Right ventricle myocardium inferior (tissue), 1 donor: ENCODE measurements at regions of chr6 and their contacts with region 1.

Region 1: DNA sequence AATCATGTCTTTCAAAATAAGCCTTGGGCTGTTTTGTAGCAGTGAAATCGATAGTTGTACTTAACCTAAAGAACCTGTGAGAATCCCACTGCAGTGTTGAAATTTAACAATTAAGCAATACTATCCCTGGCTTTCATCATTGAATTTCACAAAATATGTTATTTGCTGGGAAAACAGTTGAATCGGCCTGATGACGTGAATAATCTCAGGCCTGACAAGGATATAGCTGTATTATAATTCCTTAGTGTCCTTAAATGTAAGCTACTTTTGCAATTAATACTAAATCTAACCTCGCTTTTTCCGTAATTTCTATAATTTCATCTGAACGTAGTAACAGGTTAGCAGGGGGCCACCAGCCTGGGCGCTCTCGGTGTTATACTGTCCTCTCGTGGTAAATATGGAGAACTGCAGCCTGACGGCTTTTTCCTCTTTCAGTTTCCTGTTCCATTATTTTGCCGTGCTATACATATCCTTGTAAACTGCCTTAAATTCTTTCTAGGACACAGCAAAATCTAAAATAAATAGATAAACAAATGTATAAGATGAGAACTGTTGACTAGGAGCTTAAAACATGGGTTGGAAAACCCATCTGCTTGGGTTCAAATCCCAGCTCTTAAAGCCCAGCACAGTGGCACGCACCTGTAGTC is 24.0 kb downstream of the MTFR2 start:
- DNase-seq: peak; percentile 78
- ATAC-seq: peak; percentile 74

Region 2: DNA sequence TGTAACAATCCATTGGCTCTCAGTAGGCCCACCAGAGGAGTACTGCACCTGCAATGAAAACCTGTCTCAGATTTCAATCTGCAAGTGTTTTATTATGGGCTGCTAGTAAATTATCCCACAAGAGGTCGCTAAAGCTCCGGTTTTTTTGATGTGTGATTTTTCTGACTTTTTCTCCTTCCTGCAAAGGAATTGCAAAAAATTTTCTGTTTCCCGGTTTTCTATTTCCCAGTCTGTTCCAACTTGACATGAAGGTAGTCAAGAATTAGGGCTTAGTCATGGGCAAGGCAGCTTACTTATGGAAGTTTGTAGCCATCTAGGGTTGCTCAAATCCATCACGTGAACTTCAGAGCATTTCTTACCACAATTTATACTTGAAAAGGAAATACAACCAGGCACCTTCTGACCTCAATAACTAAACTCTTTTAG is 690.1 kb before region 1 on chr6:
- intact Hi-C with region 1: loop called (anchors 1 kb)
- DNase-seq: no peak
- ATAC-seq: no peak

Region 3: GRCh38 chr6:135944612-135945011 is 281.5 kb before region 1 on chr6:
- intact Hi-C with region 1: loop called (anchors 5 kb)
- DNase-seq: no peak
- ATAC-seq: no peak

Region 4: DNA sequence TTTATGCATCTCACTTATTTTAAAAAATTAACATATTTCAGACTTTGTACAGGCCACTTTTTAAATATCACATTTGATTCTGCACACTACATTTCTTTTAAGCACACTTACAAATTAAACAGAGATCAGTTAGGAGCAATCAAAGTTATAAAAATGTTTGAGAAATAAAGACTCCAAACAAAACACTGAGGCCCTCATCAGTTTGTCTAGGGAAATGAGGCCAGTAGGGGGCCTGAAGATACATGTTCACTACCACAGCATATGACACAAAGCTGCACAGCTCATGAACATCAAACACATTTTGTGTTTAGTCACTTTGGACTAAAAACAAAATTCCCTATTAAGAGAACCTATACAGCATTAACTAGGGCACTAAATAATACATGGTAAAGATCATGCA is 194.2 kb before region 1 on chr6:
- intact Hi-C with region 1: loop called (anchors 5 kb)
- DNase-seq: no peak
- ATAC-seq: no peak

Region 5: DNA sequence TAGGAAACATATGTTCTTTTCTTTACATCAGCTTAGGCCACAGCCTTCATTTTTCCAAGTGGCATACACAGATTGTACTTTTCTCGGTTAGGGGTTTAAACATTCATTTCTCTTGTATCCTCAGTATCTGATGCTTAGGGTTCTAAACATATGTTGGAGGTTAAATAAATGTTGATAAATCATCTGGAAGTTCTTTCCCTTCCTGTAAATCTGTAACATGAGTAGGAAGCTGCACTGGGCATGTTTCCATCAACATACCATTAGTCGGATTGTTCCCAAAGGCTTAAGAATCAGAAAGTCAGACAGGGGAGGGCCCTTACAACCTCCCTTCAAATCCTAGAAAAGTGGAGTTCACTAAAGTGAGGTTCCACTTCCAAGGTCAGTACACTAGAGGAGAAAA is 118.3 kb after region 1 on chr6:
- intact Hi-C with region 1: no loop called
- DNase-seq: no peak
- ATAC-seq: no peak